A673 (cell line): ENCODE measurements at regions of chr19 and their contacts with region 1.

Region 1: DNA sequence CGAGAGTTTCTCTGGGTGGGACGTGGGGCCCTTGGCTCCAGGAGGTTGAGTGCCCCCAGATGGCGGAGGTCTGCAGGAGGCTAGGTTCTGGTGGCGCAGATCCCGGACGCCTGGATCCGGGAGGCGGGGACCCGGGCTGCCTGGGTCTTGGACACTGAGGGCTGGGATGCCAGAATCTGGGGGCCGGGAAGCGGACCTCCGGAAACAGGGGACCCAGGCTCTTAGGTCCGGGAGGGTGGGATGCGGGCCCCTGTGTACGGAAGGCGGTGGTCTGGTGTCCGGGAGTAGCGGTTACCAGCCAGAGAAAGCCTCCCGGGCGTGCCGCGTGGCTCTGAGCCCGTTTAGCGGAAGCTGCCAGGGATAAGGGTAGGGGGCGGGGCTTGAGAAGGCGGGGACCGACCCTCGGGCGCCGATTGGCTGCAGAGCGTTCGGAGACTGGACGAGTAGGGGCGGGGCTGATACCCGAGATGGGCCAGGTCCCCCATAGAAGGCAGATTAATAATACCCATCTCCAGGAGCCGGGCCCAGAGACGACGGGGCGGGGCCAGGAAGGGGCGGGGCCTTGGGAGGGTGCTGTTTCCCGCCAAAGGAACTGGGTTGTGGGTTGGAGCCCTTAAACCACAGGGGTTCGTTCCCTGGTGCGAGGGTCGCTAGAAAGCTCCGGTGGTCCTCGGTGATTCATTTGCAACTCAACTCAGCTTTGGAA is at the start of gene SLC1A5:
- DNase-seq: peak; percentile 99
- H3K4me3 ChIP-seq: peak within 1 kb of the TSS; percentile 99
- H3K27ac ChIP-seq: peak within 1 kb of the TSS; percentile 92
- H3K4me1 ChIP-seq: peaks cover 23% of the 10 kb centered on the region
- H3K27me3 ChIP-seq: no peaks in the 10 kb centered on the region
- CTCF ChIP-seq: no peak
- total RNA-seq, gene SLC1A5: 283 and 295 TPM in 2 replicates

Region 2: GRCh38 chr19:46739290-46739771 is 49.1 kb before region 1 on chr19:
- CTCF ChIA-PET with region 1: no interaction called
- POLR2A ChIA-PET with region 1: no interaction called
- intact Hi-C with region 1: no loop called
- DNase-seq: no peak
- H3K4me3 ChIP-seq: no peak overlapping the region
- H3K27ac ChIP-seq: peak overlapping the region; percentile 47
- H3K4me1 ChIP-seq: no peaks in the 10 kb centered on the region
- H3K27me3 ChIP-seq: no peaks in the 10 kb centered on the region
- CTCF ChIP-seq: no peak

Region 3: GRCh38 chr19:46803555-46803954 is 15.1 kb after region 1 on chr19:
- CTCF ChIA-PET with region 1: no interaction called
- POLR2A ChIA-PET with region 1: no interaction called
- intact Hi-C with region 1: no loop called
- DNase-seq: no peak
- H3K4me3 ChIP-seq: no peak overlapping the region
- H3K27ac ChIP-seq: no peak overlapping the region
- H3K4me1 ChIP-seq: no peaks in the 10 kb centered on the region
- H3K27me3 ChIP-seq: no peaks in the 10 kb centered on the region
- CTCF ChIP-seq: no peak

Region 4: GRCh38 chr19:46815833-46816627 is 27.6 kb after region 1 on chr19:
- CTCF ChIA-PET with region 1: no interaction called
- POLR2A ChIA-PET with region 1: interaction called, 10 read pairs
- intact Hi-C with region 1: no loop called
- DNase-seq: no peak
- H3K4me3 ChIP-seq: no peak overlapping the region
- H3K27ac ChIP-seq: no peak overlapping the region
- H3K4me1 ChIP-seq: peaks cover 3% of the 10 kb centered on the region
- H3K27me3 ChIP-seq: no peaks in the 10 kb centered on the region
- CTCF ChIP-seq: no peak

Region 5: DNA sequence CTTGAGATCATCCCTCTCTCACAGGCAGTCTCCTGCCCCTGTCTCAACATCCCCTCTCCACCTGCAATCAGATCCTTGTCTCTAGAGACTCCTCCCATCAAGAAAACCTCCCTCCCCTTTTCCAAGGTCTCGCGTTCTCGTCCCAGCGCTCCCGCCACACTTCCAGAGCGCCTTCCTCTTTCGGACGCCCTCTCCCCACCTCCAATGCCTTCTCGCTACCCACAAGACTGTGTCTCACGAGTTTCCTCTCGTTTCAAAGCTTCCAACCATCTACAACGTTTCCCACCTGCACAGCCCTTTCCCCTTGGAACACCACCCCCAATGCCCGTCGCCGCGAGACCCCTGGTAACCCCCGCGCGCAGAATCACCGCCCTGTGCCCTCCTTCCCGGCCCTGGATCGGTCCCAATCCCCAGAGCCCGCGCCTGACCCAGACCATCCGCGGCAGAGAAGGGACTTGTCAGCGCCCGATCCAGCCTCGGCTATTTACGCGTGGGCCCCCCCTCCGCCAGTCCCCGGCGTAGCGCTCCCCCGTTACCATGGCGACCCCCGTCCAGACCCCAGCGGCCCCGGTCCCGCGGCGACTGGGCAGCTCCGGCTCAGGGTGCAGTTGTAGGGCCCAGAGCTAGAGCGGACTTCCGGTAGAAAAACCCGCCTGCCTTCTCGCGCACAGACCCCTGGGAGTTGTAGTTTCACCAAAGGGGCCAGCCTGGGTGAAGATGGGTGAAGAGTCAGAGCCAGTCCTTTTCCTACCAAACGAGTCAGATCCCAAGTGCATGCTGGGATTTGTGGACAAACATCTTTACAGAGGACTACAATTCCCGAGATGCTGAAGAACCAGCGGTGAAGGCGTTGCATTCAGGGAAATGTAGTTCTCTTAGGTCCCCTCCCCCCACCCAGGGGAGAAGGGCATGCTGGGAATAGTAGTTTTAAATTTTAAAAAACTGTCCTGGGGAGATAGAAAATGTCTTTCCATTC is 62.1 kb after region 1 on chr19 and contains the start of gene AP2S1:
- CTCF ChIA-PET with region 1: no interaction called
- POLR2A ChIA-PET with region 1: no interaction called
- intact Hi-C with region 1: loop called (anchors 5 kb)
- DNase-seq: peak; percentile 99
- H3K4me3 ChIP-seq: peak within 1 kb of the TSS; percentile 60
- H3K27ac ChIP-seq: peak within 1 kb of the TSS; percentile 81
- H3K4me1 ChIP-seq: peaks cover 10% of the 10 kb centered on the region
- H3K27me3 ChIP-seq: no peaks in the 10 kb centered on the region
- CTCF ChIP-seq: no peak
- total RNA-seq, gene AP2S1: 226 and 241 TPM in 2 replicates

Region 6: GRCh38 chr19:47013041-47013517 is 224.7 kb after region 1 on chr19:
- CTCF ChIA-PET with region 1: no interaction called
- POLR2A ChIA-PET with region 1: no interaction called
- intact Hi-C with region 1: no loop called
- DNase-seq: peak; percentile 86
- H3K4me3 ChIP-seq: no peak overlapping the region
- H3K27ac ChIP-seq: no peak overlapping the region
- H3K4me1 ChIP-seq: no peaks in the 10 kb centered on the region
- H3K27me3 ChIP-seq: no peaks in the 10 kb centered on the region
- CTCF ChIP-seq: peak; percentile 99

Region 7: DNA sequence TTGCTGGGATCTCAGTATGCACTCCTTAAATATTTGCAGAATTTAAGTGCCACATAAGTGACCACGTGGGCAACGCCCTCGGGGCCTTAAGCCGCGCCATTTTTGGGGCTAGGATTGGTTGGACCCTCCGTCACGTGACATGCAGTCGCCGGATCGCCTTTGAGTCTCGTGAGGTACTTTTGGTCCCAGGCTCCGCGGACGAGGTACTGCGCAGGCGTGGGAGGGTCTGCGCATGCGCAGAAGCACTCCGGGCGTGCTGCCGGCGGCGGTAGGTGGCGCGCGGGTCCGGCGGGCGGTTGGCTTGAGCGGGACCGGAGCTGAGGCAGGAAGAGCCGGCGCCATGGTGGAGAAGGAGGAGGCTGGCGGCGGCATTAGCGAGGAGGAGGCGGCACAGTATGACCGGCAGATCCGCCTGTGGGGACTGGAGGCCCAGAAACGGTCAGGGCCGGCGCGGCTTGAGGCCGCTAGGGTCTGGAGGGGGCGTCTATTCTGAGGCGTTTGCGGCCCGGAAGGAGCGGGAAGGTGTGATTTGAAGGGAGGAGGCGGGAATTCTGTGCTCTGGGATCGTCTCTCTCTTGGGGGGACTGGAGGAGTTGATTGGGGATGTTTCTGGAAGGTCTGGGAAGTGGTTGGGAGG is 342.3 kb after region 1 on chr19 and contains the start of gene SAE1:
- CTCF ChIA-PET with region 1: no interaction called
- POLR2A ChIA-PET with region 1: no interaction called
- intact Hi-C with region 1: loop called (anchors 5 kb)
- DNase-seq: peak; percentile 99
- H3K4me3 ChIP-seq: peak within 1 kb of the TSS; percentile 79
- H3K27ac ChIP-seq: peak within 1 kb of the TSS; percentile 95
- H3K4me1 ChIP-seq: peaks cover 19% of the 10 kb centered on the region
- H3K27me3 ChIP-seq: no peaks in the 10 kb centered on the region
- CTCF ChIP-seq: peak; percentile 70
- total RNA-seq, gene SAE1: 302 and 314 TPM in 2 replicates